ENCODE measurements at regions of chr10 and their contacts with region 1.

Region 1: GRCh38 chr10:102641880-102642735 is 2.2 kb upstream of the TRIM8 start:
- DNase-seq: peak; percentile 87
- H3K4me3 ChIP-seq: peak overlapping the region; percentile 91
- CTCF ChIP-seq: no peak

Region 2: DNA sequence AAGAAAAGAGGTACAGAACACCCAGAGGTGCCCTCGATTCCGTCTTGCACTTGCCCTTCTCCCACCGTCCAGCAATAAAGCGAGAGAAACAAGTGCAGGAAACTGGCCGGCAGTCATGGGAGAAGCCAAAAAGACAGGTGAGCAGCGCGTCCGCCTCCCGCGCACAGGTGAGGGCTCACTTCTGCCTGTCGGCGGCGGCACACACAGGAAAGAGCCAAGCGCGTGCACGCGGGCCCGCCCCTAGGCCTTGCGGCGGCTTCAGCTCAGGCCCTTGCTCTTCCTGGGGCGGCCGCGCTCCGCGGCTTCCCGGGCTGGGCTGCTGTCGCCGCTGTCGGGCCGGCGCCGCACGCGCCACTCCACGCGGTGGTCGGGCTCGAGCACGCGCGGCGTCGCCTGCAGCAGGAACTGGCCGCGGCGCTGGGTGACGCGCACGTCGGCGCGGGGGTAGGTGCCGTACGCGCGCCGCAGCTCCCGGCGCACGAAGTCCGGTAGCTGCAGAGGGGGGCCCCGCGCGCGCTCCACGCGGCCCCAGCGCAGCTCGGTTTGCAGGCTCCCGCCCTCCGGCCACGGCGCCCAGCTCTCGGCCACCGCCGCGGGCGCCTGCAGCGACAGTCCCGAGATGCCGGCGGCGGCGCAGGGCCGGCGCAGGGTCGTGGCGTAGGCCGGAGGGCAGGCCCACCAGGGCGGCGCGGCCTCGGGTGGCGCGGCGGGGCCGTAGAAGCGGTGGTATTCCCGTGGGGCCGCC is 191.7 kb before region 1 on chr10:
- CTCF ChIA-PET with region 1: no interaction called
- POLR2A ChIA-PET with region 1: no interaction called
- DNase-seq: no peak
- H3K4me3 ChIP-seq: peak overlapping the region; percentile 70
- CTCF ChIP-seq: no peak

Region 3: DNA sequence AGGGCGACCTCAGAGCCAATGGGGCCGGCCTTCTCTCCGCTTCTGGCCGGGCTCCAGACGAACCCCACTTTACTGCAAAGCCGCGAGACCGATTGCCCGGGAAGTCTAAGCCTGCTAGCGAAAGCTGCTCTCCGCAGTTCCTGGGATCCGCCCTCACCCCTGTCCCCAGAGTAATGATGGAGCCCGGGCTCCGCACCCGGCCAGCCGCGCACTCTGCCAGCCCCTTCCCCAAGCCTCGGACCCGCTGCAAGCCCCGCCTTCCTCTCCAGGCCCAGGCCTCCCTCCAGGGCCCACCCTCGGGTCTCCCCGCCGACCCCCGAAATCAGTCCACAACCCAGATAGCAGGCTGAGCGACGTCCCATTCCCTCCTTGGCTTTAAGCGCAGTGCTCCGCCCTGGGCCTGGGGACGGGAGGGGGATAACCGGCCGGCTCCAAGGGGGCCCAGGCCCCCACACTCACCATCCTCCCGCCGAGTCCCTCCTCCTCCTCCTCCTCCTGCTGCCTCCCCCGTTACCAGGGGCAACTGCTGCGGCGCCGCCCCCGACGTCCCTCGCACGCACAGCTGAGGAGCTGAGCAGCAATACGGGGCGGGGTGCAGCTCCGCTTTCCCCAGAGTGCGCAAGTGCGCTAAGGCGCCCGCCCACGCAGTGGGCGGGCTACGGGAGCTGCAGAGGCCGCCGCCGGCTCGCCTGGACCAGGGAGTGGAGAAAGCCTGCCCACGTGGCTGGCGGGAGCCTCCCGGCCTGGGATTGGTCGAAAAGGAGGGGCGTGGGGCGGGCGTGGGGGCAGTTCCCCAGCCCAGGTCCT is 71.9 kb after region 1 on chr10 and contains the start of gene ARL3:
- CTCF ChIA-PET with region 1: interaction called, 8 read pairs
- POLR2A ChIA-PET with region 1: interaction called, 14 read pairs
- DNase-seq: peak; percentile 82
- H3K4me3 ChIP-seq: peak within 1 kb of the TSS; percentile 93
- CTCF ChIP-seq: peak; percentile 77

Region 4: GRCh38 chr10:103284165-103284564 is 642.1 kb after region 1 on chr10:
- CTCF ChIA-PET with region 1: no interaction called
- POLR2A ChIA-PET with region 1: no interaction called
- DNase-seq: no peak
- H3K4me3 ChIP-seq: no peak overlapping the region
- CTCF ChIP-seq: no peak